ENCODE measurements at regions of chr17 and their contacts with region 1.

Region 1: DNA sequence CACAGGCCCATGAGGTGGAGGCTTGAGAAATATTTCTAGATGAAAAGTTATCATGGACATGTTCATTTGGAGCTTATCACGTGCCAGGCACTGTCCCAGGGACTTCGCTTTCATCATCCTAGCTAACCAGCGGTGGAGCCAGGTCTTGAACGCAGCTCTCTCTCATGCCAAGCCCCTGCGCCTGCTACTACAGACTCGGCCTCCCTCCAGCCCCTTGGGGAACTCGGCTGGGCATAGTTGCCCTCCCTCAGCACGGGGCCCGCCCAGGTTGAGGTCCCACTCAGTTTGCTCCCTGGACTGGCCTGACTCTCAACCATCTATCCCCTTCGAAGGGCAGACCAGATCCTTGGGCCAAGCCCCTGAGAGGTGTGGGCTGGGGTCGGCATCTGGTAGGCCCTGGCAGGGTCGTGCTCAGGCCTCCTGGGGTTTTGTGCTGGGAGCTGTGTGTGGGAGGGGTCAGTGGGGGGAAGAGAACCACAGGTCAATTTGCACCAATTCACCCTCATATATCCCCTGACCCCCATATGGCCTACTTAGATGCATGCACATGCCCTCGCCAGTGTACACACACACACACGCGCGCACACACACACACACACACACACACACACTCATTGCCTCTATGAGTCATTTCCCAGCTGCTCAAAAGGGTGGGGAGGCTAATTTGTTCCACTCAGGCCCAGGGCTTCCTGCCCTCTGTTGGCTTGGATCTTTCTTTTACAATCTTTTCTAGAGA is 12.1 kb upstream of the SCN4A start:
- DNase-seq: no peak
- ATAC-seq: no peak
- H3K4me3 Mint-ChIP-seq: no peak overlapping the region
- H3K27ac Mint-ChIP-seq: no peak overlapping the region
- H3K4me1 Mint-ChIP-seq: peaks cover 15% of the 10 kb centered on the region
- H3K27me3 Mint-ChIP-seq: peaks cover 4% of the 10 kb centered on the region; the same call in 1 of the 2 replicates
- CTCF ChIP-seq: no peak

Region 2: DNA sequence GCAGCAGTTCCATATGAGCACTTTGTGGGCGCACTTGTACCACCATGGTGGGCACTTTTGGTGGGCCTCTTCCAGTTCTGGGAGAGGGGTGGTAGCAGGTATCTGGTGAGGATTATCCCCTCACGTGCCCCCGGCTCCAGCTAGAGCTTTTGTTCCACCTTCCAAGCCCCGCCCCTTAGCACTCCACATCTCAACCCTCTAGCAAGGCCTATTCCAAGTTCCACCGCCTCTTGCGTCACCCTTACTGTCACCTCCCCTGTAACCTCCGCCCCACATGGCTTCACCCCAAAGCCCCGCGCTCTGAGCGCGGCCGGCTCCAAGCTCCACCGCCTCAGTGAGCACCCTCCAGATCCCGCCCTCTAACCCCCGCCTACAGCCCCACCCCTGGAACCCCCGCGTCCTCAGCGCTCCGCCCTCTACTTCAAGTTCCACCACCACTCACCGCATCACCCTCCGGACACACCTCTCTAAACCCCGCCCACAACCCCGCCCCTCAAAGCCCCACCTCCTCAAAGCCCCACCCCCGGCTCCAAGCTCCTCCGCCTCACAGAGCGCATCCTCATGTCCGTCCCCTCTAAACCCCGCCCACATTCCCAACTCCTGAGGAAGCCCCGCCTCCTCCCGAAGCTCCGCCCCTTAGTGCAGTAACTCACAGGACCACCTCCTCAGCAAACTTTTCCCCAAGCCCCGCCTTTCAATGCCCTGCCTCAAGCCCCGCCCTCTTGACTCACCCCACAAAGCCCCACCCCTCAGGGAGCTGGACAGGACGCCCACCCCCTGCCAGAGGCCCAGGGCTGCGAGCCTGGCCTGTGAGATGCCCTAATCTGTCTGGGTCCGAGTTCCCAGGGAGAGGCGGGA is 23.2 kb before region 1 on chr17:
- CTCF ChIA-PET with region 1: interaction called, 26 read pairs
- POLR2A ChIA-PET with region 1: no interaction called
- DNase-seq: peak; percentile 100
- ATAC-seq: peak; percentile 90
- H3K4me3 Mint-ChIP-seq: peak overlapping the region; percentile 76
- H3K27ac Mint-ChIP-seq: 0 out of 2 replicates have a peak overlapping the region, but pooled peaks have one; percentile 70
- H3K4me1 Mint-ChIP-seq: peaks cover 20% of the 10 kb centered on the region
- H3K27me3 Mint-ChIP-seq: no peaks in the 10 kb centered on the region; the same call in 1 of the 2 replicates
- CTCF ChIP-seq: no peak

Region 3: GRCh38 chr17:63998050-63998720 is 13.4 kb after region 1 on chr17 and contains the start of gene PRR29:
- CTCF ChIA-PET with region 1: interaction called, 13 read pairs
- POLR2A ChIA-PET with region 1: no interaction called
- DNase-seq: peak; percentile 82
- ATAC-seq: peak; percentile 78
- H3K4me3 Mint-ChIP-seq: peak within 1 kb of the TSS; percentile 86
- H3K27ac Mint-ChIP-seq: no peak within 1 kb of the TSS
- H3K4me1 Mint-ChIP-seq: peaks cover 16% of the 10 kb centered on the region
- H3K27me3 Mint-ChIP-seq: peaks cover 40% of the 10 kb centered on the region
- CTCF ChIP-seq: no peak
- total RNA-seq, gene PRR29: 0.64 to 1.1 TPM (median 0.85 TPM) in 3 replicates

Region 4: GRCh38 chr17:64036198-64036922 is 51.5 kb after region 1 on chr17:
- CTCF ChIA-PET with region 1: no interaction called
- POLR2A ChIA-PET with region 1: no interaction called
- DNase-seq: peak; percentile 60
- ATAC-seq: peak; percentile 99
- H3K4me3 Mint-ChIP-seq: no peak overlapping the region
- H3K27ac Mint-ChIP-seq: no peak overlapping the region
- H3K4me1 Mint-ChIP-seq: 0 out of 2 replicates have a peak, but pooled peaks cover 3% of the 10 kb centered on the region
- H3K27me3 Mint-ChIP-seq: no peaks in the 10 kb centered on the region
- CTCF ChIP-seq: no peak

Region 5: DNA sequence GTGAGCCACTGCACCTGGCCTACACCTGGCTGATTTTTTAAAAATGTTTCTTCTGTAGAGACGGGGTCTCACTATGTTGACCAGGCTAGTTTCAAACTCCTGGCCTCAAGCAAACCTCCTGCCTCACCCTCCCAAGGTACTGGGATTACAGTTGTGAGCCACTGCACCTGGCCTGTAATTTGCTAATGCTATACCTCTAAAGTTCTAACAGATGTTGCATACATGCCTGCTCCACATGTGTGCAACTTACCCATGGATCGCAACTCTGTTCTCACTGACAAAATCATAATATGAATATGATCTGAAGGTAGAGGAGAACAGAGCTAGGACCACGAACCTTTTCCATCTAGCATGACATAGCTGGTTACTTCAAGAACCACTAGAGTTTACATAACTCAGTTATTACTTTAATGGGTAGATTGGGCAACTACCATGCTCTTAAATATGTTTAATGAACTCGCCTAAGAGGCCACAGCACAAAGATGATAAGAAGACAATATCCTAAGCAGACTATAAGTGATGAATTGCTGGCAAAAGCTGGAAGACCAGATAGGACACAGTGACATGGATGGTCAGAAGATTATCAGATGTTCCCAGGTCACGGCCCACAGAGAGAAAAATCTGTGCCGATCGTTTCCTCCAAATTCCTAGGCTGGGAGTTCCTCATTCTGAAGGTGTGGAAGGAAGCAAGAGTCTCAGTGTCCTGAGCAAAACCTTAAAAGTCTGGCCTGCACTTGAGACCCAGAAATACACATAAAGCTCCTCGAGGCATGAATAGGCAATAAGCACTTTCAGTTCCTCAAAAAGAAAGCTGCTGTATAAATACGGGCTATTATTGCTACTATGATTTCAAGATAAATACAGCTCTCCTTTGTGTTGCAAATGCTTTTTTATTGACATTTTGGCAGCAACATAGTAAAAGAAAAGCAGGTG is 89.2 kb after region 1 on chr17:
- CTCF ChIA-PET with region 1: no interaction called
- POLR2A ChIA-PET with region 1: no interaction called
- DNase-seq: no peak
- ATAC-seq: no peak
- H3K4me3 Mint-ChIP-seq: no peak overlapping the region
- H3K27ac Mint-ChIP-seq: no peak overlapping the region
- H3K4me1 Mint-ChIP-seq: no peaks in the 10 kb centered on the region
- H3K27me3 Mint-ChIP-seq: no peaks in the 10 kb centered on the region
- CTCF ChIP-seq: no peak

Measured in WTC11 (cell line).